H1 (cell line): ENCODE measurements at regions of chr2 and their contacts with region 1.

Region 1: GRCh38 chr2:241363316-241363879 is 7.3 kb downstream of the FARP2 start:
- DNase-seq: no peak
- H3K4me3 ChIP-seq: no peak overlapping the region
- H3K27ac ChIP-seq: no peak overlapping the region
- H3K4me1 ChIP-seq: peaks cover 2 to 9% (median 8%) of the 10 kb centered on the region in 4 experiments
- H3K27me3 ChIP-seq: no peaks in the 10 kb centered on the region
- CTCF ChIP-seq: no peak
- EP300 ChIP-seq: no peak
- POLR2A ChIP-seq: no peak
- RAD21 ChIP-seq: no peak

Region 2: DNA sequence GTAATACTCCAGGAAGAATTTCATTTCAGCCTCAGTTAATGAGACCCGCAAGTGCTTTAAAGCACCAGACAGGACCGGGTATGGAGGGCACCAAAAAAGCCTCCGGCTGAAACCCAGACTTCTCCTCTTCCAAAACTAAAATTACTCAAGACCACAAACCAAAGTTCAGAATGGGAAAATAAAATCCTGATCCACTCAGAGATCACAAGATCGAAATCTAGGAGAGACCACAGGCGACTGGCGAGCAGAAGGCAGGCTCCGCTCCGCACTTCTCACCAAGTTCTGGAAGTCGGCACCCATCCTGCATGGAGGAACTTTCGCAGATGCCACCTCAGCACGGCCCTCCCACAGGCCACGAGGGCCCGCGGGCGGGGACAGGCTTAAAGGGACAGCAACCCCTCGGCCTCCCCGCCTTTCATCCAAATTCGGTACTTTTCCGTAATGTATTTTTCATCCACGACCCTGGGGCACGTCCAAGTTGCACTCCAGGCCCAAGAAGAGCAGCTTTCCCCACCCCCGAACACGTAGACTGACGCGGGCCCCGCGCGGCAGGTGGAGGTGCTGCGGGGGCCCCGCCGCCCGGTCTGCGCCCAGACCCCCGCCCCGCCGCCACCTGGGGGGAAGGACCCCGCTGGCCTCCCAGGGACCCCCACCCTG is 91.6 kb before region 1 on chr2:
- CTCF ChIA-PET with region 1: no interaction called
- POLR2A ChIA-PET with region 1: no interaction called
- DNase-seq: peak in 1 of 2 experiments; percentile 58
- H3K4me3 ChIP-seq: peak overlapping the region; percentile 55 to 83 (median 66)
- H3K27ac ChIP-seq: no peak overlapping the region
- H3K4me1 ChIP-seq: peaks cover 0 to 14% (median 3%) of the 10 kb centered on the region in 4 experiments; a peak in 5 of 7 replicates
- H3K27me3 ChIP-seq: no peaks in the 10 kb centered on the region
- CTCF ChIP-seq: no peak
- EP300 ChIP-seq: no peak
- POLR2A ChIP-seq: no peak
- RAD21 ChIP-seq: no peak

Region 3: GRCh38 chr2:241339839-241340630 is 23.4 kb before region 1 on chr2:
- CTCF ChIA-PET with region 1: no interaction called
- POLR2A ChIA-PET with region 1: no interaction called
- DNase-seq: no peak
- H3K4me3 ChIP-seq: no peak overlapping the region
- H3K27ac ChIP-seq: no peak overlapping the region
- H3K4me1 ChIP-seq: no peaks in the 10 kb centered on the region
- H3K27me3 ChIP-seq: no peaks in the 10 kb centered on the region
- CTCF ChIP-seq: no peak
- EP300 ChIP-seq: no peak
- POLR2A ChIP-seq: no peak
- RAD21 ChIP-seq: no peak

Region 4: DNA sequence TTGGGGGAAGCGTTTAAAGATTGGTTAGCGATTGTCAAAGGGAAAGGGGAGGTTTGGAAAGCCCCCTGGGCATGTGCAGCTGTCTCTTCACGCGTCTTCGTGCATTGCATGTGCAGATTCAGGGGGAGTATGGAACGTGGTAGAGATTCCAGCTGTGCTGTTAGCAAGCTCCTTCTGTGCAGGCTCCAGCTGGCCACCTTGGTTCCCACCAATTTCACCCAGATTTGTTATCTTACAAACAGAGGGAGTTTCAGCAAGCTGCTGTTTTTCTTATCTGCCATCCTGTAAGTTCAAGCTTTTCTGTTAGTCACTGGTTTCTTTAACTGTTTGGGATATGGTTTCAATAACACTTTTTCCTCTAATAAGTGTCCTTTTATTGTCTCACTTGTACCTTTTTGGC is 23.1 kb after region 1 on chr2:
- CTCF ChIA-PET with region 1: interaction called, 15 read pairs
- POLR2A ChIA-PET with region 1: interaction called, 4 read pairs
- DNase-seq: no peak
- H3K4me3 ChIP-seq: no peak overlapping the region
- H3K27ac ChIP-seq: no peak overlapping the region
- H3K4me1 ChIP-seq: no peaks in the 10 kb centered on the region
- H3K27me3 ChIP-seq: 0 out of 7 replicates have a peak, but pooled peaks cover 0 to 2% (median 0%) of the 10 kb centered on the region in 4 experiments
- CTCF ChIP-seq: no peak
- EP300 ChIP-seq: no peak
- POLR2A ChIP-seq: no peak
- RAD21 ChIP-seq: no peak